Endothelial cell of umbilical vein (primary cell): ENCODE measurements at regions of chr12 and their contacts with region 1.

Region 1: DNA sequence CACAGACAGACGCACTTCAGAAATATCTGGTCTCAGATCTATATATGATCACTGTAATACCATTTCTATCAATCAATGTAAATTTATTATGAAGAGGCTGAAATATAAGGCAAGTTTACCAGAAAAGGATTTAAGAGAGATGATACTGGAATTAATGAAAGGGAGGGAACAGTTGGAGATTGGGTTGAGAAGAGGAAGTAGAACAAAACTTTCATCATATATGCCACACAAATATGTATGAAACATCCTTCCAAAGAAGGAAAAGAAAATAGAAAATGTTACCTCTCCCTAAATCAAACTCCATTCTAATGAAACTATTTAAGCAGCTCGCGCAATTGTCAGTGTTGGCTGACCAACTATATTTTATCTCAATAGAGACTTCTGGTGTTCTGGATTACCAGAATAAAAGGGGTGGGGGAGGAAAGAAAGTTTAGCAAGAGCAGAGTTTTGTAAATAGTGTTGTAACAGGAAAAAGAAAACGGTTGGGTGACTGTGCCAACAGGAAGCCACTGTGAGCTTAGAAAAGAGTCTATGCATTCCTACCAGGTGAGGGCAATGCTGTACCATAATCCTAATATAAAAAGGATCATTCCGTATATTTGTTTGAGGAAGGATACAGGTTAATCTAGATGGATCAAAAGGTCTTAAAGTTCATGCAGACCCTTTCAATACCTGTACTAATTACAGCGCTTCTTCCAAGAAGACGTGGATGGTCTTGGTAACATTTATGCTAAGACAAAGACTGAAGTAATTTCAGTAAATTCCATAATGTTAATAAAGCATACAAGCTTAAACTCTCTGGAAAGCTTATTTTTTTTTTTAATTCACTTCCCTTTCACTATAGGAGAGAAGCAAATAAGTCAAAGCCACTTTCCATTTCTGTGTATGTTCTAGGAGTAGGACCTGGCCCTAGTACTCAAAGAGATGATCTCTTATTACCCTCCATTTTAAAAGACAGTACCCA is 14.5 kb upstream of the LLPH start:
- DNase-seq: peak; percentile 88
- H3K4me3 ChIP-seq: peak overlapping the region in 1 of 3 experiments; percentile 46
- H3K27ac ChIP-seq: peak overlapping the region; percentile 62
- H3K4me1 ChIP-seq: peaks cover 20% of the 10 kb centered on the region
- H3K27me3 ChIP-seq: no peaks in the 10 kb centered on the region
- CTCF ChIP-seq: peak; percentile 59 to 62
- POLR2A ChIP-seq: peak; percentile 23

Region 2: GRCh38 chr12:66159123-66159522 is 14.1 kb after region 1 on chr12:
- CTCF ChIA-PET with region 1: interaction called, 11 read pairs
- POLR2A ChIA-PET with region 1: no interaction called
- dilution Hi-C with region 1: no loop called
- intact Hi-C with region 1: no loop called
- DNase-seq: no peak
- H3K4me3 ChIP-seq: no peak overlapping the region
- H3K27ac ChIP-seq: no peak overlapping the region
- H3K4me1 ChIP-seq: no peaks in the 10 kb centered on the region
- H3K27me3 ChIP-seq: no peaks in the 10 kb centered on the region
- CTCF ChIP-seq: no peak
- POLR2A ChIP-seq: no peak

Region 3: DNA sequence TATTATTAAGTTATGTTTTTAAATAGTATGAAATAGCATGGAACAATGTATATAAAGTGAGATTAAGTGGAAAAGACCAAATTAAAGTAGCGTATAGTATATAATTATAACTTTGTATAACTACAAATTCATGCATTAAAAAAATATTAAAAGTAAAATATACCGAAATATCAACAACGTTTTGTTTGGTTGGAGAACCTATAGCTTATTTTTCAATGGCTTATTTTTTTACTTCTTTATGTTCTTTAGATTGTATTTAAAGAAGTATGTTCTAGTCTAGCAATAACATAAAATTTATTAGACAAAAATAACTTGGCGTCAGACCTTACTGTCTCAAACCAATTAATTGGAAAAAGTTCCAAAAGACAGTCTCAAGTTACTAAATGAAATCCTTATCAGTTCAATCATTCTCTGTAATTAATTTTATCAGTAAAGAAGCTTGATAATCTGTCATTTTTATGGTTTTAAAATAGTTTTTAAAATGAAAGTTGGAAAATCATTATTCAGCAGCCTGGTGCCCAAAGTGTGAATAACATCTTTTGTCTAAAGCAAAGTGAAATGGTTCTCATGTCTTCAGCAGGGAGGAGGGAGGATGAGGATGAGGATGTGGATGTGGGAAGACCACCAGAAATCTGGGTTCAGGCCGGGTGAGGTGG is 90.7 kb after region 1 on chr12:
- CTCF ChIA-PET with region 1: interaction called, 21 read pairs
- POLR2A ChIA-PET with region 1: no interaction called
- dilution Hi-C with region 1: no loop called
- intact Hi-C with region 1: loop called (anchors 1 kb)
- DNase-seq: peak; percentile 45
- H3K4me3 ChIP-seq: peak overlapping the region; percentile 50 to 78 (median 54)
- H3K27ac ChIP-seq: no peak overlapping the region
- H3K4me1 ChIP-seq: peaks cover 3% of the 10 kb centered on the region
- H3K27me3 ChIP-seq: no peaks in the 10 kb centered on the region
- CTCF ChIP-seq: peak in 1 of 2 donors; percentile 3
- POLR2A ChIP-seq: no peak

Region 4: GRCh38 chr12:66301944-66302826 is 157.1 kb after region 1 on chr12 and contains the start of gene HELB:
- CTCF ChIA-PET with region 1: interaction called, 11 read pairs
- POLR2A ChIA-PET with region 1: no interaction called
- dilution Hi-C with region 1: no loop called
- intact Hi-C with region 1: no loop called
- DNase-seq: peak; percentile 95
- H3K4me3 ChIP-seq: peak within 1 kb of the TSS; percentile 77 to 86 (median 78)
- H3K27ac ChIP-seq: peak within 1 kb of the TSS; percentile 29
- H3K4me1 ChIP-seq: no peaks in the 10 kb centered on the region
- H3K27me3 ChIP-seq: peaks cover 14 to 22% of the 10 kb centered on the region in 2 experiments
- CTCF ChIP-seq: no peak
- POLR2A ChIP-seq: peak; percentile 67
- total RNA-seq, gene HELB: 3.4 and 4.0 TPM in 2 replicates

Region 5: DNA sequence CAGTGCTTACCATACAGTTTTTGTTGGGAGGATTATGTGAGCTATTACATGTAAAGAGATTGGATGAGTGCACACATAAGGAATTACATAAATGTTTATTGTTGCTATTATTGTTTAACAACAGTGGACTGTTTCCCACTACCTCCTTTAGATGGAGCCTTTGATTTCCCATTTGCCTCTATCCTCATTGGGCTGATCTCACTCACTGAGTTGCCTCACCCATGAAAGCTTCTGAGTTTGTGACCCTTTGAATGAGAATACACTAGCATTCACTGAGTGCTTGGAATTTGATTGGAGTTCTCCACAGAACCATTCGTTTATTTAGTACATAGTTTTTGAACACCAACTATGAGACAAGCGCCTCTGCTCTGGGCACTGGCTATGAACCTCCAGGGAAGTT is 278.2 kb after region 1 on chr12:
- CTCF ChIA-PET with region 1: no interaction called
- POLR2A ChIA-PET with region 1: no interaction called
- dilution Hi-C with region 1: no loop called
- intact Hi-C with region 1: no loop called
- DNase-seq: no peak
- H3K4me3 ChIP-seq: no peak overlapping the region
- H3K27ac ChIP-seq: no peak overlapping the region
- H3K4me1 ChIP-seq: no peaks in the 10 kb centered on the region
- H3K27me3 ChIP-seq: peaks cover 10 to 12% of the 10 kb centered on the region in 2 experiments
- CTCF ChIP-seq: no peak
- POLR2A ChIP-seq: no peak

Region 6: GRCh38 chr12:66693901-66694675 is 549.0 kb after region 1 on chr12:
- CTCF ChIA-PET with region 1: interaction called, 21 read pairs
- POLR2A ChIA-PET with region 1: no interaction called
- dilution Hi-C with region 1: no loop called
- intact Hi-C with region 1: loop called (anchors 1 kb)
- DNase-seq: peak; percentile 69
- H3K4me3 ChIP-seq: no peak overlapping the region
- H3K27ac ChIP-seq: no peak overlapping the region
- H3K4me1 ChIP-seq: no peaks in the 10 kb centered on the region
- H3K27me3 ChIP-seq: peaks cover 0 to 14% of the 10 kb centered on the region in 2 experiments
- CTCF ChIP-seq: peak; percentile 33 to 44
- POLR2A ChIP-seq: no peak